ENCODE measurements at regions of chr15 and their contacts with region 1.

Region 1: DNA sequence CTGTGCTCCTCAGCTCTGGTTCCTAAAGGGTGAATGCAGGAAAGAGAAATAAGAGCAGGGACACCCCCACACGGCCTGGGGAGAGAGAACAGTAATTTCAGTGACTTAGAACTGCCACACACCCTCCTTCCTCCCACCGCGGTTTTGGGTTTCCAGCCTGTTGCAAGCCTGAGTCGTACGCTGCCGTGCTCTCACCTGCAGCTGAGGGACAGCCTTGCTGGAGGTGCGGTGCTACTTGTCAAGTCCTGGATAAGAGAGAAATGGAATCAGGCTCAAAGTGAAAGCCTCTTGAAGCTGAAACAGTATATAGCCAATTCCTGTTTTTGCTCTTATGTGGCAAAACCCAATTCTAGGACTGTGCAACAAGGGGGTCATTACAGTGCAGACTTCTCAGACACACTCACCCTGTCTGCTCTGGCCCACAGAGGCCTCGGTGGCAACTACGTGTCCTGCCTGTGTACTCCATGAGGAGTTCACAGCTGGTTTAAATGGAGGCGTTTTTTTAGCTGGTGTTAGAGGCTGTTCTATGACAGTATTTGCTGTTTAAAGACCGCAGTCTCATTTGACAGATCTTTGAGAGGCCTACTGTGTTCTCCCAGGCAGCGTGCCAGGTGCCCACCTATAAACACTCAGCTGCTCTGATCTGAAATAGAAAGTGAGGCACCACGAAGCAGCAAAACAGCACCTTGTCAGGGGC is 42.9 kb downstream of the TBC1D2B start:
- DNase-seq: peak; percentile 66
- ATAC-seq: peak; percentile 92
- H3K4me3 ChIP-seq: no peak overlapping the region; the same call in 1 of the 2 replicates
- H3K27ac ChIP-seq: peak overlapping the region; percentile 4
- H3K4me1 ChIP-seq: peaks cover 40% of the 10 kb centered on the region
- H3K27me3 ChIP-seq: no peaks in the 10 kb centered on the region
- CTCF ChIP-seq: peak in 1 of 3 experiments; percentile 14; a peak in 1 of 6 replicates
- EP300 ChIP-seq: 0 out of 4 replicates have a peak, but pooled peaks of 1 of the 2 experiments have one; percentile 26
- POLR2A ChIP-seq: no peak
- RAD21 ChIP-seq: peak; percentile 24; the same call in 1 of the 2 replicates

Region 2: DNA sequence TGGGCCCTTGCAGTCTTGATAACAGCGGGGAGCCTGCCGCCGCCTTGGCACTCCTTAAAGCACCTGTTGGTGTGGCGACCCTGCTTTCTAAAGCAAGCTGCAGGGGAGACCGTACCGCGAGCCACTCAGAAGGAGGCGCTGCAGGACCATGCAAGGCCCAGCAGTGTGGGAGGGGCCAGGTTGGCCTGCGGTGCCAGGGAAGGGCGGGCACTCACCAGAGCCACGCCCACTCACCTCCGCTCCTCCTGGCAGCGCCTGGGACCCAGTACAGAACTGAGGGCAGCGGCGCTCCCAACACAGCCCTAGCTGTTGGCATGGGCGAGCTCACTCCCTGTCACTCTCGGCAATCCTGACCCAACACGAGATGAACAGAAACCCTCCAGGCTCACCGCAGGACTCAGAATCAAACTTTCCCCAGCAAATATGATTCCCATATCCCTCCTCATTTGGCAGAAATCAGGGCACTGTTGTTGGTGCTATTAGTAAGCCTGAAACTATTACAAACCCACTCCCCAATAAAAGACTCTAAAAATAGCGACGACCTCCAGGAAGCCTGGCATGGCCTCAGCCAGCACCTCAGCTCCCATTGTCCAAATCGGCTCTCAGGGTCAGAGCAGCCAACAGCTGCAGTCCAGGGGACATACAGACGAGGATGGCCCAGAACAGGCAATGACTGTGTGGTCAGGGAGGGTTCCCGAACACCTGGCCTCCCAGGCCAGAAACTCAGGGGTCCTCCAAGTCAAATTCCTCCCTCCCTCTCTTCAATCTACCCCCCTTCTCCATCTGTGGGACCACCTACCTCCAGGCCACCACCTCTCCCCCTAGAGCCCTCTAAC is 34.3 kb before region 1 on chr15:
- CTCF ChIA-PET with region 1: interaction called, 3 read pairs
- POLR2A ChIA-PET with region 1: interaction called, 3 read pairs
- RAD21 ChIA-PET with region 1: interaction called, 14 read pairs
- SMC1A ChIA-PET with region 1: interaction called, 6 read pairs
- in situ Hi-C with region 1: no loop called
- intact Hi-C with region 1: no loop called
- DNase-seq: no peak
- ATAC-seq: peak; percentile 87
- H3K4me3 ChIP-seq: no peak overlapping the region
- H3K27ac ChIP-seq: no peak overlapping the region
- H3K4me1 ChIP-seq: peaks cover 16% of the 10 kb centered on the region
- H3K27me3 ChIP-seq: no peaks in the 10 kb centered on the region
- CTCF ChIP-seq: peak; percentile 62 to 82 (median 72)
- EP300 ChIP-seq: no peak
- POLR2A ChIP-seq: no peak
- RAD21 ChIP-seq: peak; percentile 82

Region 3: DNA sequence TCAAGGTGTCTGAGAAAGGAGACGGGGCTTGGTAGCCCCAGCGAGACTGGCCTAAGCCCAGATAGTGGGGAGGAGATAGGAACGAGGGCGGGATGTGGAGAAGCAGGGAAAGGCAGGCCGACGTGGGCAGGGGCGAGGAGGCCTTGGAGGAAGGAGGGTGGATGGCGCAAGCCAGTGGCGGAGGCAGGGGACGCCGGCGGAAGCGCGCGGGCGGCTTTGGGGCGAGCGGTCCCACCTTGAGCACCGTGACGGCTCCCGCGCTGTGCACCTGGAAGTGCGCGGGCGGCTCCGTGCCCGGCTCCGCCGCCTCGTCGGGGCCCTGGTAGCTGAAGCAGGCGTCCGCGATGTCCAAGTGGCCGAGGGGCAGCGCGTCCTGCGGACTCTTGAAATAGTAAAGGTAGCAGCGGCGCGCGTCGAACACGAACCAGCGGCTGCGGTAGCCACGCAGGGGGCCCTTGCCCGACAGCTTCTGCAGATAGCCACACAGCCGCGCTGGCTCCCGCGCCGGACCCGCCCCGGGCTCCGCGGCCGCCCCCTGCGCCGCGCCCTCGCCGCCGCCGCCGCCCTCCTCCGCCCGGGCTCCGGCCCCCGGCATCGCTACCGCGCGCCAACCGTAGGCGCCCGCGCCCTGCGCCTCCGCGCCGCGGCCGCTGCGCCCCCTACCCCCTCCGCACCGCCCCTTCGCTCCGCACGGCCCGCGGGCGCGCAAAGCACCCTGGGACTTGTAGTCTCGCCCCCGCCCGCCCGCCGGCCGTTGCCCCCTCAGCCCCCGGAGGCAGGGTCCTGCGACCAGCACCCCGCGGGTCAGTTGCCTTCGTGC is 42.6 kb after region 1 on chr15 and contains the start of gene TBC1D2B:
- CTCF ChIA-PET with region 1: interaction called, 75 read pairs
- POLR2A ChIA-PET with region 1: interaction called, 3 read pairs
- RAD21 ChIA-PET with region 1: interaction called, 17 read pairs
- SMC1A ChIA-PET with region 1: interaction called, 87 read pairs
- in situ Hi-C with region 1: no loop called
- intact Hi-C with region 1: no loop called
- DNase-seq: no peak
- ATAC-seq: peak; percentile 81
- H3K4me3 ChIP-seq: peak within 1 kb of the TSS; percentile 99
- H3K27ac ChIP-seq: peak within 1 kb of the TSS; percentile 62
- H3K4me1 ChIP-seq: peaks cover 10% of the 10 kb centered on the region
- H3K27me3 ChIP-seq: no peaks in the 10 kb centered on the region
- CTCF ChIP-seq: no peak; a peak in 1 of 6 replicates
- EP300 ChIP-seq: no peak
- POLR2A ChIP-seq: no peak
- RAD21 ChIP-seq: no peak
- polyA plus RNA-seq, gene TBC1D2B: 1.3 to 1.4 TPM

Measured in GM12878 (cell line).